Naive thymus-derived CD8-positive, alpha-beta T cell (primary cell): ENCODE measurements at regions of chr12 and their contacts with region 1.

Region 1: DNA sequence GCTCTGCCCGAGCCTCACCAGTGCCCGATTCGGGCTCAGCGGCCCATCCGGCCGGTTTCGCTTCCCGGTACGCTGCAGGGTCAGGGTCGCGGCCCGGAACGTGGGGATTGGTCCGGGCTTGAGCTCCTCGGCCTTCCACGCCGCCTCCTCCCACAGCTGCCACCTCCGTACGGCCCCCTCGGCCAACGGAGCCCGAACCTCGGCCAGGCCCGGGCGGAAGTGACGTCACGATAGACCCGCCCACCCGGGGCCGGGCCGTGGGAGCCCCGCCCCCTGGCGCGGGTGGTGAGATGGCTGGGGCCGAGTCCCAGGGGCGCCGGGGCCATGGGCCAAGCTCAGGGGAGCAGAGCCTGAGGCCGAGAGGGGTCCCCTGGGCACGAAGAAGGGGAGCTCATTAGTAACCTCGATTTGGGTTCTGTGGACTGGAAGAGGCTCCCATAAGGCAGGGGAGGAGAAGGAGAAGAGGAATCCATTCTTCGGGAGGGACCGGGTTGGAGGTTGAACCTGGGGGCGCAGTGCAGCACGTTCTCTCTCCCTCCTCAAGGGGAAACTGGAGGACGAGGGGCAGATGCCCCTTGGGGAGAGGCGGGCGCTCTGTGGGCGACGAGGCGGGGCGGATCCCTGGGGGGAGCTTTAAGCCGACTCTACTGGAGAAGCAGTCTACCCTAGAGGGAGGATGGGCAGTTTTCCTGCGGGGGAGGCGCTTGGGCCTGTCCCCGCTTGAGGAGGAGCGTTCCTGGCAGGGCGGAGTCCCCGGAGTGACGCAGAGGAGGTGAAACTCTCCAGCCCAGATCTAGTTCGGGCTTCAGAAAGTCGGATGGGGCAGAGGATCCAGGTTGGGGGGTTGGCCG is at the start of gene MLF2:
- DNase-seq: peak; percentile 93 to 98 (median 96)
- ATAC-seq: peak; percentile 92 to 95
- H3K4me3 Mint-ChIP-seq: peak within 1 kb of the TSS; percentile 92 to 98 (median 94)
- H3K27ac Mint-ChIP-seq: peak within 1 kb of the TSS; percentile 95 to 100 (median 98)
- H3K4me1 Mint-ChIP-seq: peaks cover 11 to 36% (median 24%) of the 10 kb centered on the region in 4 donors
- H3K27me3 Mint-ChIP-seq: peaks cover 0 to 2% (median 0%) of the 10 kb centered on the region in 5 donors
- polyA plus RNA-seq, gene MLF2: 98.5 to 133 (median 126) TPM

Region 2: DNA sequence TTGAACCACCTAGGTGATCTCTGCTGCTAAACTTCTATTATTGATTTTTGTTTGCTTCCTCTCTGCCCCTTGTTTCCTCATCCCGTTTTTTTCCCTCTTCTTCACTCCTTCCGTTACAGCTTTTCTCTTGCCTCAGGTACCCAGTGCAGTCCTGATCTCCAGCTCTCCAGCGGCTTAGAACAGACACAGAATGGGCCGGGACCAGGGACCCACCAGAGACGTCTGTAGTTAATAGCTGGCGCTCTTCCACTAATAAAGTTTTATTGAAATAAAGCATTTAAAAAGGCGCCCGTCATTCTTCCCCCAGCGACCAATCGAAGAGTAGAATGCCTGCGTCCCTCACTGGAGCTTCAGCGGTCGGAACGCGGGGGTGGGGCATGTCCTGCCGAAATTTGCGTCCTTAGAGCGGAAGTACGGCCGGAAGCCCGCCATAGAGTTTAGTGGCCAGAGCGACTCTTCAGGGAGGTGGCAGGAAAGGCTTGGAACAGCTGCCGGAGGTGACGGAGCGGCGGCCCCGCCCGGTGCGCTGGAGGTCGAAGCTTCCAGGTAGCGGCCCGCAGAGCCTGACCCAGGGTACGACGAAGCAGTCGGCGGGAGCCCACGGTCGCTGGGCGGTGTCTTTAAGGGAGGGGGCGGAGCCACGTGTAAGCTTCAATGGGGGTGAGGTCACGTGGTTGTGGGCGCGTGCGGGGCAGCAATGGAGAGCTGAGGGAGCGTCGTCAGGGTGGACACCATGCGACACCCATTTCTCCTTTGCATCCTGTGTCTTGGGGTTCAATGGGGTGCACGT is 29.3 kb before region 1 on chr12 and contains the start of gene COPS7A:
- POLR2A ChIA-PET with region 1: interaction called, 40 read pairs
- DNase-seq: peak; percentile 73 to 98 (median 92)
- ATAC-seq: peak; percentile 85 to 90
- H3K4me3 Mint-ChIP-seq: peak within 1 kb of the TSS; percentile 74 to 99 (median 93)
- H3K27ac Mint-ChIP-seq: peak within 1 kb of the TSS; percentile 92 to 98 (median 96)
- H3K4me1 Mint-ChIP-seq: peaks cover 19 to 32% (median 24%) of the 10 kb centered on the region in 4 donors
- H3K27me3 Mint-ChIP-seq: no peaks in the 10 kb centered on the region
- polyA plus RNA-seq, gene COPS7A: 34.9 to 42.4 (median 36.2) TPM

Region 3: DNA sequence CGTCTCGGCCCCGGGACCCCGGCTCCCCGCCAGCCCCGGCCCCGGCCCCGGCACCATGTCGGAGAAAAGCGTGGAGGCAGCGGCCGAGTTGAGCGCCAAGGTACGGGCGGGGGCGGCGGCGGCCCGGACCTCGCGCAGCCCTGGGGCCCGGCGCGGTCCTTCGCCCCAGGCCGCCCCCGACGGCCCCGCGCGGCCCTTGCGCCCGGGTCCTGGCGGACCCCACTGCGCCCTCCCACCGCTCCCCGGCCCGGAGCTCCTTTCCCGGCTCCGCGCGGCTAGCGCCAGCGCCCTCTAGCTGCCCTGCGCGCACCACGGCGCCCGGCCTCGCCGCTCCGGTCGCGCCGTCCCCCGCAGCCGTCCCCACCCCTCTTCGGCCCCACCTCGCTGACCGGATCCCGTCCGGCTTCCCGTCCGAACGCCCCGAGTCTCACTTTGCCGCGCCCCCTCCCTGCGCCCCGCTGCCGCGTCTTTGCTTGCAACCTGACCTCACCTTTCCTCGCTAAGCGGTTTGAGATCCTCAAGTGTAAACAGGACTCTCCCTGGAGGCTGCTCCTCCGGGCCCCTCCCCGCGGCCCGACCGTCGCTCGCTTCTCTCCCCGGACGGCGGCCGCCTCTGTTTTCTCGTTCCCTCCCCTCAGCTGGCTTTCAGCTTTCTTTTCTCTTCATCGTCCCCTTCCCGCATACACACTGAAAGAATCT is 13.7 kb after region 1 on chr12:
- POLR2A ChIA-PET with region 1: interaction called, 15 read pairs
- DNase-seq: peak in 7 of 10 donors; percentile 41 to 66 (median 48)
- ATAC-seq: peak; percentile 75 to 81
- H3K4me3 Mint-ChIP-seq: peak overlapping the region; percentile 75 to 90 (median 86)
- H3K27ac Mint-ChIP-seq: peak overlapping the region in 3 of 10 donors; percentile 27 to 73 (median 49)
- H3K4me1 Mint-ChIP-seq: peaks cover 20 to 42% (median 33%) of the 10 kb centered on the region in 4 donors
- H3K27me3 Mint-ChIP-seq: peaks cover 24 to 73% (median 58%) of the 10 kb centered on the region in 5 donors

Region 4: GRCh38 chr12:6778574-6779550 is 25.7 kb after region 1 on chr12:
- POLR2A ChIA-PET with region 1: interaction called, 19 read pairs
- DNase-seq: peak; percentile 73 to 93 (median 84)
- ATAC-seq: peak; percentile 85 to 94
- H3K4me3 Mint-ChIP-seq: peak overlapping the region; percentile 80 to 93 (median 87)
- H3K27ac Mint-ChIP-seq: peak overlapping the region; percentile 0 to 91 (median 76)
- H3K4me1 Mint-ChIP-seq: peaks cover 20 to 29% (median 28%) of the 10 kb centered on the region in 4 donors
- H3K27me3 Mint-ChIP-seq: peaks cover 7 to 36% (median 21%) of the 10 kb centered on the region in 5 donors

Region 5: GRCh38 chr12:6792522-6793201 is 39.5 kb after region 1 on chr12:
- POLR2A ChIA-PET with region 1: interaction called, 14 read pairs
- DNase-seq: peak; percentile 17 to 77 (median 54)
- ATAC-seq: peak; percentile 95 to 97
- H3K4me3 Mint-ChIP-seq: peak overlapping the region; percentile 29 to 83 (median 70)
- H3K27ac Mint-ChIP-seq: peak overlapping the region; percentile 45 to 86 (median 74)
- H3K4me1 Mint-ChIP-seq: peaks cover 20 to 46% (median 36%) of the 10 kb centered on the region in 4 donors
- H3K27me3 Mint-ChIP-seq: peaks cover 0 to 12% (median 0%) of the 10 kb centered on the region in 5 donors